Mammary epithelial cell (primary cell): ENCODE measurements at regions of chr17 and their contacts with region 1.

Region 1: GRCh38 chr17:8209909-8210760 is at the start of gene AURKB:
- DNase-seq: peak; percentile 96
- H3K4me3 ChIP-seq: peak within 1 kb of the TSS; percentile 67 to 99 (median 90)
- H3K27ac ChIP-seq: peak within 1 kb of the TSS; percentile 90
- H3K4me1 ChIP-seq: peaks cover 22% of the 10 kb centered on the region
- H3K27me3 ChIP-seq: no peaks in the 10 kb centered on the region
- CTCF ChIP-seq: no peak
- total RNA-seq, gene AURKB: 1.8 to 59.3 TPM

Region 2: DNA sequence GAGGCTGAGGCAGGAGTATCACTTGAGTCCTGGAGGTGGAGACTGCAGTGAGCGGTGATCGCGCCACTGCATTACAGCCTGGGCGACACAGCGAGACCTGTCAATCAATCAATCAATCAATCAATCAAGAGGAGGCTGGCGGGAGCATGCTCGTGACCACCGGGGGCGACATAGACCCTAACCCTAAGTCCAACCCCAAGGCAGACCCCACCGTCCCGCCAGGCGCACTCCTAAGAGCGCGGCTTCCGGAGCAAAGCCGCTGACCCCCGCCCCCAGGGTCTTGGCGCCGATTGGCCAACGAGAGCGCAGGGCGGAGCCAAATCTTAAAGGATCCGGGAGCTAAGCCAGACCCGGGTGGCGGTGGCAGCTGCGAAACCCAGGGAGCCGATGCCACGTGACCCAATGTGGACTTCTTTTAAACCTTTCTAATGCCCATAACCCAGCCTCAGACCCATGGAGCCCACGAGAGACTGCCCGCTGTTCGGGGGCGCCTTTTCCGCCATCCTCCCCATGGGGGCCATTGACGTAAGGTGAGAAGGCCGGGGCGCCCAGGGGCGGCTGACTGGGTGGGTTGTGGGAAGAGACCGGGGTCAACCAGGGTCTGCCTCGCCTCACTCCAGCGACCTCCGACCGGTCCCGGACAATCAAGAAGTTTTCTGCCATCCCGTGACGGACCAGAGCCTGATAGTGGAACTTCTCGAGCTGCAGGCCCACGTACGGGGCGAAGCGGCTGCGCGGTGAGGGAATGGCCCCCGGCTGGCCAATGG is 78.4 kb after region 1 on chr17 and contains the start of gene RANGRF:
- CTCF ChIA-PET with region 1: no interaction called
- dilution Hi-C with region 1: no loop called
- in situ Hi-C with region 1: no loop called
- intact Hi-C with region 1: no loop called
- DNase-seq: peak; percentile 72
- H3K4me3 ChIP-seq: peak within 1 kb of the TSS; percentile 70 to 80 (median 76)
- H3K27ac ChIP-seq: peak within 1 kb of the TSS; percentile 62
- H3K4me1 ChIP-seq: peaks cover 12% of the 10 kb centered on the region
- H3K27me3 ChIP-seq: no peaks in the 10 kb centered on the region
- CTCF ChIP-seq: no peak
- total RNA-seq, gene RANGRF: 11.3 to 25.4 TPM

Region 3: GRCh38 chr17:8300627-8301242 is 90.6 kb after region 1 on chr17:
- CTCF ChIA-PET with region 1: no interaction called
- dilution Hi-C with region 1: no loop called
- in situ Hi-C with region 1: no loop called
- intact Hi-C with region 1: loop called (anchors 1 kb)
- DNase-seq: peak; percentile 50
- H3K4me3 ChIP-seq: no peak overlapping the region
- H3K27ac ChIP-seq: no peak overlapping the region
- H3K4me1 ChIP-seq: no peaks in the 10 kb centered on the region
- H3K27me3 ChIP-seq: no peaks in the 10 kb centered on the region
- CTCF ChIP-seq: peak; percentile 89 to 90